Right ventricle myocardium inferior (tissue), 1 donor: ENCODE measurements at regions of chr7 and their contacts with region 1.

Region 1: GRCh38 chr7:2632733-2633537 is 1.1 kb downstream of the TTYH3 start:
- DNase-seq: peak; percentile 81
- ATAC-seq: no peak

Region 2: DNA sequence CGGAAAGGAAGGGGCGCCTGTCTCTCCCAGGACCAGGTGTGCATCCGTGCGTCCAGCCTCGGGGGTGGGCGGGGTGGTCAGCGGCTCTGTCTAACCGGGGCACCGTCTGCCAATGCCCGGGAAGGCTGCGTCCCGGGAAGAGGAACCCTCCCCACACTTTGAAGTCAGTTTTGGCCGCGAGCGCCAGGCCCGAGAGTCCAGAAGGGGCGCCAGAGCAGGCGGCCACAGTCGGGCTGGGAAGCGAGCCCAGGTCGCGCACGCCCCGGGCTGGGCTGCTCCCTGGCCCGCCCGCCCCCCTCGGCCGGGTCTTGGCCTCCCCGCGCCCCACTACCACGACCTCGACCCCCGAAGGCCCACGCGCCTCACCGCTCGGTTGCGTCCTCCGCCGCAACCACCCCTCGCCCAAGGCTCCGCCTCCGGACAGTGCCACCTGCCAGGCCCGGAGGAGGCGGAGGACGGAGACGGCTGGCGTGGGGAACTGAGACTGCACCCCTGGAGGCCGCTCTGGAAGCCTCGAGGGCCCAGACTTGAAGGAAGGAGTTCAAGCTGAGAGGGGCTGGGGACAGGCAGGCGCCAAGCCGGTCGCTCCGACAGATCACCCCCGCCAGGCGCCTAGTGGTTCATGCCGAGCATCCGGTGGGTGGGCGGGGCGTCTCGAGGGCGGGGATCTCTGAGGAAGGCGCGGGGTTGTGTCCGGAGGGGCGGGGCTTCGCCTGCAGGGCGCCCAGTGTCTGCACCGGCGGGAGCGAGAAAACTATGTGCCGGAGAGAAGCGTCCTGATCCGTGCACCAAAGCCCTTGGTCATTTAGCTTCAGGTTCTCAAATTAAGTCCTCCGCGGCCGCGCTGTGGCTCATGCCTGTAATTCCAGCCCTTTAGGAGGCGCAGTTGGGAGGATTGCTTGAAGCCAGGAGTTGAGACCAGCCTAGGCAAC is 77.5 kb before region 1 on chr7 and contains the start of gene BRAT1:
- intact Hi-C with region 1: loop called (anchors 5 kb)
- DNase-seq: peak; percentile 99
- ATAC-seq: peak; percentile 94
- total RNA-seq, gene BRAT1: 14.8 TPM

Region 3: GRCh38 chr7:2567679-2568278 is 65.2 kb before region 1 on chr7:
- intact Hi-C with region 1: no loop called
- DNase-seq: no peak
- ATAC-seq: peak; percentile 75

Region 4: GRCh38 chr7:2597273-2597640 is 35.7 kb before region 1 on chr7:
- intact Hi-C with region 1: no loop called
- DNase-seq: no peak
- ATAC-seq: no peak